Mammary epithelial cell (primary cell): ENCODE measurements at regions of chr14 and their contacts with region 1.

Region 1: DNA sequence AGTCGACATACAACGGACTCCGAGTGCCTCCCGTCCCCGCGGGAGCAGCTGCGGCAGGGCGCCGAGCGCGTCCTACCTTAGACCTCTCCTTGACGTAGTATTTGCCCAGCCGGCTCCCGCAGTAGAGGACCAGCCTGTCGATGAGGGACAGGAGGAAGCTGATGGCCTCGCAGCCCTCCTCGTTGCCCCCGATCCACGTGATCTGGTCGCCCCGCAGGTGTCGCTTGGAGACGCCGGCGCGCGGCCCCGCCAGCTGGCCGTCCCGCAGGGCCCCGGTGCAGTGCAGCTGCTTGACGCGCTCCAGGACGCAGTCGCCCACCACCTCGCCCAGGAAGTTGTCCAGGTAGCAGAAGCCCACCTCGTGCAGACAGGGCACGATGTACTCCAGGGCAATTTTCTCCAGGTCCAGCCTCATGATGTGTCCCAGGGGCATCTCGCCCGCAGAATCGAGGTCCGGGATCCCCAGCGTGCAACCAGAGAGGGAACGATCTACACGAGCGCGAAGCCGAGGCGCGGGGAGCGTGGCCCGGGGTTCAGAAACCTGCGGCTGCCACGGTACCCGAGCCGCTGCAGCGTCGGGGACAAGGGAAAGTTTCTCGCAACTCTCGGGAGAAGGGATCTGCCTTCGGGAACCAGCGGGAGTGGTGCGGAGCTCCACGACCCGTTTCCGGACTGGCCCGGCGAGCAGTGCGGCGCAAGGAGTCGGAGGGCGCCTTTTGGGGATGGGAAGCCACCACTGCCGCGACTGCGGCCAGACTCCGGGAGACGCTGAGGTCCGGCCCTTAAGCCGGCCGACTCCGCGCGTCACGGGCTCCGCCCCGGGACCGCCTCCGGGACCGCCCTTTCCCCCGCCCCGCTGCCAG is at the start of gene EGLN3:
- DNase-seq: peak; percentile 87
- H3K4me3 ChIP-seq: peak within 1 kb of the TSS; percentile 57 to 86 (median 70)
- H3K27ac ChIP-seq: peak within 1 kb of the TSS; percentile 22
- H3K4me1 ChIP-seq: peaks cover 4% of the 10 kb centered on the region
- H3K27me3 ChIP-seq: no peaks in the 10 kb centered on the region
- CTCF ChIP-seq: no peak
- total RNA-seq, gene EGLN3: 8.3 to 9.0 TPM

Region 2: GRCh38 chr14:33986804-33987203 is 36.3 kb after region 1 on chr14:
- CTCF ChIA-PET with region 1: interaction called, 3 read pairs
- dilution Hi-C with region 1: loop called (anchors 5 kb)
- in situ Hi-C with region 1: no loop called
- intact Hi-C with region 1: no loop called
- DNase-seq: peak; percentile 92
- H3K4me3 ChIP-seq: no peak overlapping the region
- H3K27ac ChIP-seq: no peak overlapping the region
- H3K4me1 ChIP-seq: peaks cover 18% of the 10 kb centered on the region
- H3K27me3 ChIP-seq: no peaks in the 10 kb centered on the region
- CTCF ChIP-seq: no peak

Region 3: GRCh38 chr14:34059855-34060638 is 109.5 kb after region 1 on chr14:
- CTCF ChIA-PET with region 1: no interaction called
- dilution Hi-C with region 1: no loop called
- in situ Hi-C with region 1: no loop called
- intact Hi-C with region 1: loop called (anchors 10 kb)
- DNase-seq: peak; percentile 71
- H3K4me3 ChIP-seq: peak overlapping the region; percentile 48 to 61 (median 48)
- H3K27ac ChIP-seq: peak overlapping the region; percentile 73
- H3K4me1 ChIP-seq: peaks cover 32% of the 10 kb centered on the region
- H3K27me3 ChIP-seq: no peaks in the 10 kb centered on the region
- CTCF ChIP-seq: peak in 1 of 2 donors; percentile 47